ENCODE measurements at regions of chr3 and their contacts with region 1.

Region 1: GRCh38 chr3:25648107-25648535 is 16.6 kb downstream of the TOP2B start:
- DNase-seq: peak; percentile 88
- H3K4me3 ChIP-seq: no peak overlapping the region
- H3K27ac ChIP-seq: no peak overlapping the region
- H3K4me1 ChIP-seq: no peaks in the 10 kb centered on the region
- H3K27me3 ChIP-seq: no peaks in the 10 kb centered on the region
- CTCF ChIP-seq: peak; percentile 87

Region 2: GRCh38 chr3:25775936-25776335 is 127.8 kb after region 1 on chr3:
- intact Hi-C with region 1: loop called (anchors 10 kb)
- DNase-seq: no peak
- H3K4me3 ChIP-seq: no peak overlapping the region
- H3K27ac ChIP-seq: no peak overlapping the region
- H3K4me1 ChIP-seq: no peaks in the 10 kb centered on the region
- H3K27me3 ChIP-seq: no peaks in the 10 kb centered on the region
- CTCF ChIP-seq: no peak

Region 3: DNA sequence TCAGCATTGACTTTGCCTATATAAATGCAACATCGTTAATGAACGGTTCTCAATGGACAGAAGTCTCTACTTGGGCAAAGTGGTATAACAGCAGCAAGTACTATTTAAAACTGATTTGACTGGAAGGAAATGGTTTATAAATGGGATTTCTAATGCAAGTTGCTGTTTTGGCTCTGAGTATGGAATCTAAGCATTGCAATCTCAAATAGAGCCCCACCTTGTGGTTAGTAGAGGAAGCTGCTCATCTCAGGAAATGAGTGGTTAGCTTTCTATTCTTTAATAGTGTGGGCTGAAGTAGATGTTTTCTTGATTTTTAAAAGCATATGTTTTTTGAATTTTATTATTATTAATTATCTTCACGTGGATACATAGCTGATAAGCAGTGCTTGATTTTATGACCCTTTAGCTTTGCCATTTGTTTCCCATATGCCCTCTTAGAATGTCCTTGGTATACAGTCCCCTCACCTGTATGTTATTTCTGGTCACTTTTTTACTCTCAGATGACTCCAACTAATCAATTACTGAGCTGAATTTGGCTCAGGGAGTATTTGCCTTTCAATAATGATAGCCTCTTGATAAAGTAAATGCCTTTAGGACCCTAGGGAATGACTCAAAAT is 208.9 kb after region 1 on chr3:
- intact Hi-C with region 1: loop called (anchors 5 kb)
- DNase-seq: no peak
- H3K4me3 ChIP-seq: no peak overlapping the region
- H3K27ac ChIP-seq: no peak overlapping the region
- H3K4me1 ChIP-seq: no peaks in the 10 kb centered on the region
- H3K27me3 ChIP-seq: no peaks in the 10 kb centered on the region
- CTCF ChIP-seq: peak; percentile 71

Measured in colonic mucosa (tissue), 4 donors.